WTC11 (cell line): ENCODE measurements at regions of chr12 and their contacts with region 1.

Region 1: DNA sequence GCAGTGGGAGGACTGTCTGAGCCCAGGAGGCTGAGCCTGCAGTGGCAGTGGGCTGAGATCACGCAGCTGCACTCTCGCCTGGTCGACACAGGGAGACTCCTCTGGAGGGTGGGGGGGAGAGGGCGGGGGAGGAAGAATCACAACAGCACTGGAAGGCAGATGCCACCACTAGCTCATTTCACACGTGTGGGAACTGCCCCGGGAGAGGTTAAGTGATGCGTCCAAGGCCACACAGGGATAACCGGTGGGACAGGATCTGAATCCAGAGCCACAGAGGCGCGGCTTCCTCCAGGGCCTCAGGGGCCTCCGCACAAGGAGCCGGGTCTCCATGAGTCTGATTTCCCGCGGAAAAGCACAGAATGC is 20.8 kb downstream of the STX2 start:
- DNase-seq: no peak
- ATAC-seq: no peak
- H3K4me3 Mint-ChIP-seq: peak overlapping the region; percentile 49
- H3K27ac Mint-ChIP-seq: peak overlapping the region; percentile 84
- H3K4me1 Mint-ChIP-seq: peaks cover 50% of the 10 kb centered on the region
- H3K27me3 Mint-ChIP-seq: no peaks in the 10 kb centered on the region
- CTCF ChIP-seq: no peak

Region 2: GRCh38 chr12:130770413-130771028 is 47.7 kb before region 1 on chr12:
- CTCF ChIA-PET with region 1: interaction called, 10 read pairs
- POLR2A ChIA-PET with region 1: no interaction called
- DNase-seq: no peak
- ATAC-seq: peak; percentile 83
- H3K4me3 Mint-ChIP-seq: no peak overlapping the region
- H3K27ac Mint-ChIP-seq: no peak overlapping the region
- H3K4me1 Mint-ChIP-seq: peaks cover 3% of the 10 kb centered on the region
- H3K27me3 Mint-ChIP-seq: peaks cover 4% of the 10 kb centered on the region; the same call in 1 of the 2 replicates
- CTCF ChIP-seq: no peak

Region 3: DNA sequence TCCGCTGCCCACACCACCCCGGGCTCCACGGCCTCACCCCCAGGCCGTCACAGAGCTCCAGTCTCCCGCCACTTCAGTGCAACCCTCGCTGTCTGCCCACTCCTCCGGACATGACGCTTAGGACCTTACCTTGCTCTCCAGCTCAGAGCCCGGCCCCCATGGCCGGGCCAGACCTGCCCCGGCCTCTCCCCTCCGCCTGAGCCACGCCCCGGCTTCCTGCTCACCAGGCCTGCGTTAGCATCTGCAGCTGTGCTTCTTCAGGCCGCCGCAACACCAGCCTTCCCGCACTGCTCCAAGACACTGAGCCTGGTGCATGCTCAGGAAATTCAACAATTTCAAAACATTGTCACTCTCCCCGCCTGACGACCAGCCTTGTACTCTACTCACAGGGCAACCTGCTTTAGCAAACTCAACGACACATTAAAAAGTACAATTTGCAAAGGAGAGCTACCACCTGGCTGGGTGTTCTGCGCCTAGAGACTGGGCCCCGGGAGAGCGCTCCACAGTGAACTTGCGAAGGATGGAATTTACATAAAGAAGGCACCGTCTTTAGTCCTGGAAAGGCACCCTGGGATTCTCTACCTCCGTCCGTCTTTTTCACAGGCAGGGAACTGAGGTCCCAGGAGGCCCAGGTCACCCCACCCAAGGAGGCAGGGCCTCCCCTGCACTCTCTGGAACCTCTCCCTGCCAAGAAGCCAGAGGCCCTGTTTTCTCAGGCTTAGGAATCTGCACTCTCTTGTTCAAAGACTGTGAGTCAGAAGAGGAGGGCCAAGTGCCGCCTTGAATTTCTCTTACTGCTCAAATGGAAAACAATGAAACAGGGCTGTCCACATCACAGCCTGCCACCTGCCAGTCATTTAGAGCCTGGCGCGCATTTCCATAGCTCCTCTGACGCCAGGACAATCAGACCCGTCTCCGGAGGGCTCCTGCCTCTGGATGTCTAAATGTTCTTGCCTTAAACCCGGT is 30.5 kb before region 1 on chr12:
- CTCF ChIA-PET with region 1: interaction called, 11 read pairs
- POLR2A ChIA-PET with region 1: interaction called, 3 read pairs
- DNase-seq: peak; percentile 76
- ATAC-seq: peak; percentile 88
- H3K4me3 Mint-ChIP-seq: peak overlapping the region; percentile 54
- H3K27ac Mint-ChIP-seq: peak overlapping the region; percentile 95
- H3K4me1 Mint-ChIP-seq: peaks cover 55% of the 10 kb centered on the region
- H3K27me3 Mint-ChIP-seq: no peaks in the 10 kb centered on the region; the same call in 1 of the 2 replicates
- CTCF ChIP-seq: no peak